CD4-positive, alpha-beta T cell (primary cell): ENCODE measurements at regions of chr17 and their contacts with region 1.

Region 1: GRCh38 chr17:16653209-16654041 is at the start of gene ZNF624:
- DNase-seq: peak; percentile 78 to 94 (median 83)
- ATAC-seq: peak; percentile 97
- H3K4me3 ChIP-seq: peak within 1 kb of the TSS; percentile 93
- H3K4me3 Mint-ChIP-seq: peak within 1 kb of the TSS; percentile 86
- H3K27ac ChIP-seq: peak within 1 kb of the TSS in 1 of 2 donors; percentile 43
- H3K27ac Mint-ChIP-seq: peak within 1 kb of the TSS; percentile 84
- H3K4me1 ChIP-seq: peaks cover 14% of the 10 kb centered on the region
- H3K4me1 Mint-ChIP-seq: peaks cover 31% of the 10 kb centered on the region
- H3K27me3 ChIP-seq: no peaks in the 10 kb centered on the region
- H3K27me3 Mint-ChIP-seq: peaks cover 18% of the 10 kb centered on the region
- CTCF ChIP-seq: no peak
- total RNA-seq, gene ZNF624: 2.8 to 3.2 TPM

Region 2: DNA sequence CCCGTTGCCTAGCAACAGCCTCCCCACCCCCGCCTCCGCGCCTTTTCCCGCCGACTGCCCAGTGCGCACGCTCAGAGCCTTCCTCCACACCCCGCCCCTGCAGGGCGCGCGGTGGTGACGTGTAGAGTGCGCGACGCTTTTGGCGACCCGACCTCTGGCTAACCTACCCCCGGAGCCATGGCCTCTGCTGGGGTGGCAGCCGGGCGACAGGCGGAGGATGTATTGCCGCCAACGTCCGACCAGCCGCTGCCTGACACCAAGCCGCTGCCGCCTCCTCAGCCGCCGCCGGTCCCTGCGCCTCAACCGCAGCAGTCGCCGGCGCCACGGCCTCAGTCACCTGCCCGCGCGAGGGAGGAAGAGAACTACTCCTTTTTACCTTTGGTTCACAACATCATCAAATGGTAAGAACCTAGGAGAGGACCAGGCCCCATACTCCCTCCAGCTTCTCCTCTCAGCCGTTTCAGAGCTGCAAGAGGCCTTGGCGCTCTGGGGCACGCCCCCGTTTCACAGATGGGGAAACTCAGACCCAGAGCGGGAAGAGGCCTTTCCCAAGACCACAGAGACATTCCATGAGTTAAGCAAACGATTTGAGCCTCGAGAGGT is 823.5 kb after region 1 on chr17 and contains the start of gene MED9:
- CTCF ChIA-PET with region 1: no interaction called
- POLR2A ChIA-PET with region 1: no interaction called
- intact Hi-C with region 1: loop called in 1 of 2 experiments (anchors 5 kb)
- DNase-seq: peak; percentile 92 to 98 (median 94)
- ATAC-seq: peak; percentile 98
- H3K4me3 ChIP-seq: peak within 1 kb of the TSS; percentile 82
- H3K4me3 Mint-ChIP-seq: peak within 1 kb of the TSS; percentile 91
- H3K27ac ChIP-seq: peak within 1 kb of the TSS; percentile 42 to 58
- H3K27ac Mint-ChIP-seq: peak within 1 kb of the TSS; percentile 87
- H3K4me1 ChIP-seq: peaks cover 42% of the 10 kb centered on the region
- H3K4me1 Mint-ChIP-seq: peaks cover 51% of the 10 kb centered on the region
- H3K27me3 ChIP-seq: peaks cover 0 to 2% of the 10 kb centered on the region in 2 experiments
- H3K27me3 Mint-ChIP-seq: peaks cover 6% of the 10 kb centered on the region
- CTCF ChIP-seq: no peak
- total RNA-seq, gene MED9: 27.0 to 27.9 TPM